CD8-positive, alpha-beta T cell (primary cell): ENCODE measurements at regions of chr2 and their contacts with region 1.

Region 1: DNA sequence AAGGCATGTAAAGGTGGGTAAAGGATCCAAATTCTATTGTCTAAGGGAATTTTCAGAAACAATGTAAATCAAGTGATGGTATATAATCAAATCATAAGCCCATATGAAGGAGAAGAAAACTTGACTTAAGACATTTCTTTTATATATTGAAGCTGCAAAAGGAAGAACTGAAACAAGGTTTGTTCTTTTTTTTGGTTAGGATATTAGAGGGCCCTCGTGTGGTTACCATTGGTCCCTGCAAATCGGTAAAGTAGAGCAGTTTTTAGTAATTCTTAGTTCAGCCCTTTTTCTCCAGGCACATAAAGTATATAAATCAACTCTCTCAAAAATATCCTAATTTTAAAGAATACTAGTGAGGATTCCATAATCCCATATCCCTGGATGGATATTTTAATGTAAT is 105.6 kb upstream of the STK17B start:
- DNase-seq: peak in 4 of 9 experiments; percentile 28 to 78 (median 56)
- ATAC-seq: peak; percentile 55
- H3K4me3 ChIP-seq: no peak overlapping the region
- H3K4me3 Mint-ChIP-seq: no peak overlapping the region
- H3K27ac ChIP-seq: no peak overlapping the region
- H3K27ac Mint-ChIP-seq: peak overlapping the region; percentile 72
- H3K4me1 ChIP-seq: peaks cover 38% of the 10 kb centered on the region
- H3K4me1 Mint-ChIP-seq: peaks cover 39% of the 10 kb centered on the region
- H3K27me3 ChIP-seq: no peaks in the 10 kb centered on the region
- H3K27me3 Mint-ChIP-seq: no peaks in the 10 kb centered on the region
- CTCF ChIP-seq: peak; percentile 85

Region 2: GRCh38 chr2:196131384-196131937 is 145.5 kb before region 1 on chr2:
- CTCF ChIA-PET with region 1: interaction called, 7 read pairs
- POLR2A ChIA-PET with region 1: no interaction called
- intact Hi-C with region 1: loop called (anchors 1 to 5 kb)
- DNase-seq: peak in 8 of 9 experiments; percentile 43 to 78 (median 64)
- ATAC-seq: peak; percentile 24
- H3K4me3 ChIP-seq: no peak overlapping the region
- H3K4me3 Mint-ChIP-seq: no peak overlapping the region
- H3K27ac ChIP-seq: peak overlapping the region in 1 of 2 experiments; percentile 52
- H3K27ac Mint-ChIP-seq: peak overlapping the region; percentile 83
- H3K4me1 ChIP-seq: no peaks in the 10 kb centered on the region
- H3K4me1 Mint-ChIP-seq: peaks cover 31% of the 10 kb centered on the region
- H3K27me3 ChIP-seq: no peaks in the 10 kb centered on the region
- H3K27me3 Mint-ChIP-seq: no peaks in the 10 kb centered on the region
- CTCF ChIP-seq: peak; percentile 49

Region 3: DNA sequence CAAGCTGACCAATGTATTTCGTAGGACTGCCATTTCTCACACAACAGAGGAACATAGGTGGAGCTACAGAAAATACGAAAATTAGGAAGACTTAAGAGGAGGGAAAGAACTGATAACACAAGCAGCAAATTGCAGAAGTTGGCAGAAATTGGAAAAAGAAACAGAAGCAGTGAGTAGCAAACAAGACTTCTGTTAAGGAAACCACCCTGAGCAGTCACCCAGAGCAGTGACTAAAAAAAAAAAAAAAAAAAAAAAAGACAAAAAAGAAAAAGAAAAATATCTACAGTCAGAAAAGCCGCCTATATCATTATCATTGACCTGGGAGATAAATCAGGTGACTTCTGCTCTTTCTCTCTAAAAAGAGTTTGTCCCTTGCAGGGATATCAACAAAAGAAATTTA is 127.1 kb before region 1 on chr2:
- CTCF ChIA-PET with region 1: no interaction called
- POLR2A ChIA-PET with region 1: interaction called, 5 read pairs
- intact Hi-C with region 1: loop called in 1 of 2 experiments (anchors 5 kb)
- DNase-seq: peak in 2 of 9 experiments; percentile 35 to 65
- ATAC-seq: peak; percentile 27
- H3K4me3 ChIP-seq: peak overlapping the region in 1 of 2 experiments; percentile 23
- H3K4me3 Mint-ChIP-seq: peak overlapping the region; percentile 70
- H3K27ac ChIP-seq: peak overlapping the region; percentile 4 to 17
- H3K27ac Mint-ChIP-seq: peak overlapping the region; percentile 86
- H3K4me1 ChIP-seq: peaks cover 92% of the 10 kb centered on the region
- H3K4me1 Mint-ChIP-seq: peaks cover 89% of the 10 kb centered on the region
- H3K27me3 ChIP-seq: no peaks in the 10 kb centered on the region
- H3K27me3 Mint-ChIP-seq: no peaks in the 10 kb centered on the region
- CTCF ChIP-seq: no peak

Region 4: DNA sequence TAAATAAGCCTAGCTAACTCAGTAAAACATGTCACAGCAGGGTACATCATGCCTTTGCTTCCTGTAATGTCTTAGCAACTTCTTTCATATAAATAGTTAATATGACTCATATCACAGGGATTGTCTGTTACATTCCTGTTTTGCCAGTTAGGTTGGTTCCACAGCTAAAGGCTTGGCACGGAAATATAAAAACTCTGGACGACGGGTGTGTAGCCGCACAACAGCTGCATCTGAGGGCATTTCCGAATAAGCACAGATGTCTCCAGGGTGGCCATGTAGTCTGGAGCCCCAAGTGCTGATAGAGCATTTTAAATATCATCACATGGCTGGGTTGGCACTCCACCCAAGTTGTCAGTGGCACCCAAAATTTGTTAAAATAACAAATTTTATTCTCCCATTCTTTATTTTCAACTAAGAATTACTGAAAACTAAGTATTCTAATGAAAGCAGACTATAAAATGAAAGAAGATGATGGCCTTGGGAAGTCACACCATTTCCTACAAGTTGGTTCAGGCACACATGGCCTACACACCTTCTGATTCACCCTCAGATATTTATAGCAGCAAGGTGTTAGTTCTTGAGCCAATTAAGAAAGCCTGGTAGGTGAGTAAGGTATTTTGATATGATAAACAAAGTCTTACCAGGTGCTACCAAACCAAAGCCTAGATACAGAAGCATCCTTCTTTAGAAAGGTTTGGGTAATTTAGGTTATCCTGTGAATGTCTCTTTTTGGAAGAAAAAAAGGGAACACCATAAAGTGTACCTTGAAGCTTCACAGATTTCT is 43.8 kb before region 1 on chr2:
- CTCF ChIA-PET with region 1: interaction called, 25 read pairs
- POLR2A ChIA-PET with region 1: interaction called, 4 read pairs
- intact Hi-C with region 1: loop called in 1 of 2 experiments (anchors 5 kb)
- DNase-seq: peak in 2 of 9 experiments; percentile 16 to 39
- ATAC-seq: no peak
- H3K4me3 ChIP-seq: no peak overlapping the region
- H3K4me3 Mint-ChIP-seq: no peak overlapping the region
- H3K27ac ChIP-seq: peak overlapping the region; percentile 31 to 66
- H3K27ac Mint-ChIP-seq: peak overlapping the region; percentile 91
- H3K4me1 ChIP-seq: peaks cover 85% of the 10 kb centered on the region
- H3K4me1 Mint-ChIP-seq: peaks cover 86% of the 10 kb centered on the region
- H3K27me3 ChIP-seq: no peaks in the 10 kb centered on the region
- H3K27me3 Mint-ChIP-seq: no peaks in the 10 kb centered on the region
- CTCF ChIP-seq: no peak

Region 5: DNA sequence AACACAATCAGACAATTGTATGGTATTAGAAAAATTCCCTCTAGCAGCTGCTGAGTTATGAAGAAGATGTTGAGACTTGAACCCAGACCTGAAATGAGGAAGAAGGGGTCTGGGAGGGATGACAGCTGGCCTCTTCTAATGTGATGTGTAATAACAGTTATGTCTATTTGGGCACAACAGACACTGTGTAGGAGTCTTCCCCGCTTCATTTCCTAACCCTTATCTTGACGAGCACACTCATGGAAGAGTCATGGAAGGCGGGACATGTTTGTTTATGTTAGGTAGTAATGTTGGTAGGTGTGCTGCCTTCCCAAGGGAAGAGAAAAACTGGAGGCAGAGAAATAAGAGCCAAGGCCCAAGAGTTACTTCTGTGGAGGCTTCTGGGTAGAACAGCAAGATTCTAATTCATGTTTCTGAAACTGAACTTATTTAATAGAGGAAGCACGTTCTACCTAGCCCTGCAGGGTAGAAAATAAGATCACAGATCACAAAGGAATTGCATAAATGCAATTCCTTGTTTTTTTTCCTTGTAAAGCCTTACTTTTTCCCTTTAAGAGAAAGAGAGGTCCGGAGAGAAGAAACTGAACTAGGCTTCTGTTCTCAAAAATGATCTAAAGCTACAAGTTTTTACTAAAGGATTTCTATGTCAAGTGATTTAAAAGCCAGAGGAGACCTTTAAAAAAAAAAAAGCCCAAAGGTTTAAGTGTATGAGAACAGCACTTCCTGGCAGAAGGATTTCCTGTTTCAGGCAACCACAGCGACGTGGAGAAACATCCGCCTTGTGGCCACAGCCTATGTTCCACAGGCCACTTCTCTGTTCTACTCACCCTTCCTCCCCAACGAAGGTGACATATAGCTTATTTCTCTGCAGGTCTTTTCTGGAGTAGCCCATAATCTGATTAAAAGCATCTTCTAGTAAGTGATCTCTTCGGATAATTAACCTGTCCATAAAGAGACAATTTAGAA is 37.1 kb before region 1 on chr2:
- CTCF ChIA-PET with region 1: interaction called, 25 read pairs
- POLR2A ChIA-PET with region 1: interaction called, 5 read pairs
- intact Hi-C with region 1: loop called (anchors 1 to 2 kb)
- DNase-seq: peak; percentile 55 to 94 (median 81)
- ATAC-seq: peak; percentile 72
- H3K4me3 ChIP-seq: peak overlapping the region; percentile 7 to 21
- H3K4me3 Mint-ChIP-seq: peak overlapping the region; percentile 72
- H3K27ac ChIP-seq: peak overlapping the region; percentile 33 to 73
- H3K27ac Mint-ChIP-seq: peak overlapping the region; percentile 92
- H3K4me1 ChIP-seq: peaks cover 66% of the 10 kb centered on the region
- H3K4me1 Mint-ChIP-seq: peaks cover 74% of the 10 kb centered on the region
- H3K27me3 ChIP-seq: no peaks in the 10 kb centered on the region
- H3K27me3 Mint-ChIP-seq: no peaks in the 10 kb centered on the region
- CTCF ChIP-seq: peak; percentile 35

Region 6: GRCh38 chr2:196247114-196247975 is 29.7 kb before region 1 on chr2:
- CTCF ChIA-PET with region 1: interaction called, 25 read pairs
- POLR2A ChIA-PET with region 1: interaction called, 5 read pairs
- intact Hi-C with region 1: no loop called
- DNase-seq: no peak
- ATAC-seq: no peak
- H3K4me3 ChIP-seq: no peak overlapping the region
- H3K4me3 Mint-ChIP-seq: no peak overlapping the region
- H3K27ac ChIP-seq: no peak overlapping the region
- H3K27ac Mint-ChIP-seq: peak overlapping the region; percentile 69
- H3K4me1 ChIP-seq: peaks cover 48% of the 10 kb centered on the region
- H3K4me1 Mint-ChIP-seq: peaks cover 63% of the 10 kb centered on the region
- H3K27me3 ChIP-seq: no peaks in the 10 kb centered on the region
- H3K27me3 Mint-ChIP-seq: no peaks in the 10 kb centered on the region
- CTCF ChIP-seq: no peak

Region 7: GRCh38 chr2:196263181-196263747 is 13.7 kb before region 1 on chr2:
- CTCF ChIA-PET with region 1: interaction called, 19 read pairs
- POLR2A ChIA-PET with region 1: interaction called, 5 read pairs
- intact Hi-C with region 1: loop called in 1 of 2 experiments (anchors 1 kb)
- DNase-seq: peak in 6 of 9 experiments; percentile 39 to 87 (median 58)
- ATAC-seq: peak; percentile 82
- H3K4me3 ChIP-seq: peak overlapping the region; percentile 3 to 12
- H3K4me3 Mint-ChIP-seq: peak overlapping the region; percentile 72
- H3K27ac ChIP-seq: peak overlapping the region; percentile 27 to 61
- H3K27ac Mint-ChIP-seq: peak overlapping the region; percentile 93
- H3K4me1 ChIP-seq: peaks cover 72% of the 10 kb centered on the region
- H3K4me1 Mint-ChIP-seq: peaks cover 78% of the 10 kb centered on the region
- H3K27me3 ChIP-seq: no peaks in the 10 kb centered on the region
- H3K27me3 Mint-ChIP-seq: no peaks in the 10 kb centered on the region
- CTCF ChIP-seq: no peak

Region 8: DNA sequence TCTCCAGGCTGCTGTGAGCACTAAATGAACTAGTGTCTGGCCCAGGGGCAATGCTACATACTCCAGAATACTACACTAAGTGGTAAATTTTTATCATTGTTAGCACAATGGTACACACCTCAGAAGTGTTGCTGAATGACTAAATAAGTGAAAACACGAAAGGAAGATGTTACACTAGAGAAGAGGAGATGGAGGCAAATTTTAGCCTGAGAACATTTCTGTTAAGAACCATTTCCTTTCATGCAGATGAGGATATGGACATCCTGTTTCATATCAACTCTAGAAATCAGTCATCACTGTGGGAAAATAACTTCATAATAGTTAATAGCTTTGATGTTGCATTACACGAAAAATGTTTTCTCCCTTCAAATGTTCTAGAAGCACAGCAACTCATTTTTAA is 12.0 kb after region 1 on chr2:
- CTCF ChIA-PET with region 1: no interaction called
- POLR2A ChIA-PET with region 1: no interaction called
- intact Hi-C with region 1: no loop called
- DNase-seq: no peak
- ATAC-seq: no peak
- H3K4me3 ChIP-seq: no peak overlapping the region
- H3K4me3 Mint-ChIP-seq: no peak overlapping the region
- H3K27ac ChIP-seq: no peak overlapping the region
- H3K27ac Mint-ChIP-seq: no peak overlapping the region
- H3K4me1 ChIP-seq: peaks cover 15% of the 10 kb centered on the region
- H3K4me1 Mint-ChIP-seq: peaks cover 30% of the 10 kb centered on the region
- H3K27me3 ChIP-seq: no peaks in the 10 kb centered on the region
- H3K27me3 Mint-ChIP-seq: no peaks in the 10 kb centered on the region
- CTCF ChIP-seq: no peak

Region 9: GRCh38 chr2:197851451-197851850 is 1574.4 kb after region 1 on chr2:
- CTCF ChIA-PET with region 1: no interaction called
- POLR2A ChIA-PET with region 1: no interaction called
- intact Hi-C with region 1: no loop called
- DNase-seq: peak in 1 of 9 experiments; percentile 33
- ATAC-seq: no peak
- H3K4me3 ChIP-seq: no peak overlapping the region
- H3K4me3 Mint-ChIP-seq: no peak overlapping the region
- H3K27ac ChIP-seq: no peak overlapping the region
- H3K27ac Mint-ChIP-seq: no peak overlapping the region
- H3K4me1 ChIP-seq: peaks cover 23% of the 10 kb centered on the region
- H3K4me1 Mint-ChIP-seq: peaks cover 54% of the 10 kb centered on the region
- H3K27me3 ChIP-seq: no peaks in the 10 kb centered on the region
- H3K27me3 Mint-ChIP-seq: no peaks in the 10 kb centered on the region
- CTCF ChIP-seq: no peak